ENCODE measurements at regions of chr2 and their contacts with region 1.

Region 1: GRCh38 chr2:37982147-37982582 is 57.1 kb downstream of the RMDN2 start:
- DNase-seq: peak in 3 of 4 donors; percentile 46 to 69 (median 48)
- ATAC-seq: peak; percentile 81
- H3K4me3 ChIP-seq: no peak overlapping the region
- H3K27ac ChIP-seq: no peak overlapping the region
- H3K4me1 ChIP-seq: peaks cover 0 to 20% of the 10 kb centered on the region in 2 donors
- H3K27me3 ChIP-seq: no peaks in the 10 kb centered on the region
- CTCF ChIP-seq: peak; percentile 75 to 79

Region 2: DNA sequence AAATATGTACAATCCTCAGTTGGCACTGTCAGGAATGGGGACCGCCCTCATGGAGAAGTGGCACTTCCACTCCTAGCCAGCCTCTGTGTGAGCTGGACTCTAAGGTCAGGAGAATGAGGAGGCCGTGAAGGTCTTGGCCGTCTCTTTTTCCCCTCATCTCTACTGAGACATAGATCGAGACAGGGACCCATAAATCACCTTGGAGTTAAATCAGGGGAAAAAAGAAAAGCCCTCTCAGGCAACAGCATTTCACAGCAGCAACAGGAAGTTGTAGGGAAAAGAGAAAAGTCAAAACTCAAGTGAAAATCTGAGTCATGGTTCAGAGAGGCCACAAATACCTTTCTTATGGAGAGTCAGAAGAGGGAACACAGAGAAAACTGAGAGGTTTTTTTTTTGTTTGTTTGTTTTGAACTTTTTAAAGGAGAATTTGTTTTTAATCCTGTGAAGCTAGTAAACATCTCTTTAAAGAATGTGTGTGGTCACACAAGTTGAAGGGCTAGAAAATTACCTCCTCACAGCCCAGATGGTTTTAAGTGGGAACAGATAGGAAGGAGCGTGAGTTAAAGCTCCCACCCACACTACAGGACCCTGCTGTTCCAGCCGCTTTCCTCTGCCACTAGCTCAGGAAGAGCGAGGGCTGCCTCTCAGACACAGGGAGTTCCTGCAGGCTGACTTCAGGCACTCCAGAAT is 124.4 kb after region 1 on chr2:
- intact Hi-C with region 1: no loop called
- DNase-seq: peak in 1 of 4 donors; percentile 24
- ATAC-seq: peak; percentile 78
- H3K4me3 ChIP-seq: no peak overlapping the region
- H3K27ac ChIP-seq: peak overlapping the region; percentile 81
- H3K4me1 ChIP-seq: peaks cover 7 to 18% of the 10 kb centered on the region in 2 donors
- H3K27me3 ChIP-seq: no peaks in the 10 kb centered on the region
- CTCF ChIP-seq: no peak

Region 3: DNA sequence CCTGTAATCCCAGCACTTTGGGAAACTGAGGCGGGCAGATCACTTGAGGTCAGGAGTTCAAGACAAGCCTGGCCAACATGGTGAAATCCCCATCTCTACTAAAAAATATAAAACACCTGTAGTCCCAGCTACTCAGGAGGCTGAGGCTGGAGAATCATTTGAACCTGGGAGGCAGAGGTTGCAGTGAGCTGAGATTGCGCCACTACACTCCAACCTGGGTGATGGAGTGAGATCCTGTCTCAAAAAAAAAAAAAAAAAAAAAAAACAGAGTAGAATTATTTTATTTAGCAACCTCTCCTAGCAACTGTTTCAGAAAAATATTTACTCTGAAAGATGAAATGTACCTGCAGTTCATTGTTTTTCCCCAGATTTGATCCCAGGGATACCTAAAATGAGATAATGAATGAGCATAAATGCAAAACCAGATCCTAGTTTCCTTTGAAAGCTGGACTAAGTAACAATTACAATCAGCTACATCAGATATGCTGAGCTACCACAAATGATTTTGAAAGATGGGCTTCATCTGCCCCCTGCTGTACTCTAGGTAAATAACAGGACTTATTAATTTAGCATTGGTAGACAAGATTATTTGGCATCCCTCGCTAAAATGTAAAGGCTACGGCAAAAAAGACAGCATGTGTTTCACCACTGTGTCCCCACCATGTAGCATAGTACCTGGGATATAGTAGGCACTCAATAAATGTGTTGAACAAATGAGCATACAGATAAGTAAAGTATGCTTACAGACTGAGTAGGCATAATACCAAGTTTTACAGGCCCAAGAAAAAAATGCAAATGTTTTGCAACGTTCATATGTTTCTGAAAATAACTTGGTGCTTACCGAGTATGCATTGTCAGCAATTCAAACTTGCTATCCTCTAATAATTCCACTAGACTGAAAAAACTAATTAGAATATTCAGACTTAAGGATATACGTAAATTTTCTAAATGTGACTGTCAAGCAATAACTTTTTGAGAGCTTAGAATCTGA is 292.4 kb after region 1 on chr2:
- intact Hi-C with region 1: loop called in 1 of 2 experiments (anchors 10 kb)
- DNase-seq: peak in 2 of 4 donors; percentile 81 to 85
- ATAC-seq: peak; percentile 97
- H3K4me3 ChIP-seq: no peak overlapping the region
- H3K27ac ChIP-seq: no peak overlapping the region
- H3K4me1 ChIP-seq: peaks cover 0 to 8% of the 10 kb centered on the region in 2 donors
- H3K27me3 ChIP-seq: no peaks in the 10 kb centered on the region
- CTCF ChIP-seq: peak; percentile 2 to 41

Measured in left lung (tissue), 14 donors.